ENCODE measurements at regions of chr14 and their contacts with region 1.

Region 1: DNA sequence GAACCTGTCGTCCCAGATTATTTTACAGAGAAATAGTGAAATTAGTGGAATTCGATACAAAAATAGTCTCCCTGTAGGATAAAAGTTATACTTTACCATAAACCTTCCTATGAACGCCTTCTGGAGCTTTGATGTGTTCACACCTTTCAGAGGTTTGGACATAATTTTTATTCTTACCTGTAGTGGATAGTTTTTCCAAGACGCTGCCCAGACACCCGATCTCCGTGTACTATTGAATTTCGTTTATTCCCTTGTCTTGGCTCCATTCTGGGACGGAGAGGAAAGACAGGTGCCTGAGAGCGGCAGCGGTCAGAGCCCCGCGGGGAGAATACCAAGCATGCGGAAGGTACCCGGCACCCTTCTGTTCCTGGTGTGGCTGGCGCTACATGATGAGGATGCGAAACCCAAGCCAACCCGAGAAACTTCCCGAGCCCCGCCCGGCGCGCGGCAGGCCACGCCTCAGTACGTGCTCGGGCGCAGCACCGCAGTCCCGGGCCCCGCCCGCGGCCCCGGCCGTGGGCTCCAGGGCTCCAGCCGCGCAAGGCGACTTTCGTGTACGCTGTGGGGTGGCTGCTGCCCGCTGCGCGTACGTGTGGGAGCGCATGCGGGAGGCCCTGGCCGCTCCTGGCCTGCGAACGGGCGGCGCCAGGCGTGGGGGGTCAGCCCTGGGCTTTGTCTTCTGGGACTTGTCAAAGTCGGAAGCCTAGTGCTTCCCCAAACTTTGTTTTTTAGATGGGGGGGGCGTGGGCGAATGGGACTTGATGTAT is 11.3 kb upstream of the SNAPC1 start:
- DNase-seq: peak; percentile 89
- CTCF ChIP-seq: no peak

Region 2: DNA sequence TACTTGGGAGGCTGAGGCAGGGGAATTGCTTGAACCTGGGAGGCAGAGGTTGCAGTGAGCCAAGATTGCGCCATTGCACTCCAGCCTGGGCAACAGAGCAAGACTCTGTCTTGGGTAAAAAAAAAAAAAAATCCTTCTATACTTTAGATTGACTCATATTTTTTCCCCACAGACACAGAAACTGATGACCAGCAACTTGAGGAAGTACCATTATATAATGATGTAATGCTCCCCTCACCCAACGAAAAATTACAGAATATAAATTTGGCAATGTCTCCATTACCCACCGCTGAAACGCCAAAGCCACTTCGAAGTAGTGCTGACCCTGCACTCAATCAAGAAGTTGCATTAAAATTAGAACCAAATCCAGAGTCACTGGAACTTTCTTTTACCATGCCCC is 13.0 kb before region 1 on chr14:
- CTCF ChIA-PET with region 1: interaction called, 15 read pairs
- POLR2A ChIA-PET with region 1: interaction called, 3 read pairs
- DNase-seq: no peak
- CTCF ChIP-seq: no peak

Region 3: DNA sequence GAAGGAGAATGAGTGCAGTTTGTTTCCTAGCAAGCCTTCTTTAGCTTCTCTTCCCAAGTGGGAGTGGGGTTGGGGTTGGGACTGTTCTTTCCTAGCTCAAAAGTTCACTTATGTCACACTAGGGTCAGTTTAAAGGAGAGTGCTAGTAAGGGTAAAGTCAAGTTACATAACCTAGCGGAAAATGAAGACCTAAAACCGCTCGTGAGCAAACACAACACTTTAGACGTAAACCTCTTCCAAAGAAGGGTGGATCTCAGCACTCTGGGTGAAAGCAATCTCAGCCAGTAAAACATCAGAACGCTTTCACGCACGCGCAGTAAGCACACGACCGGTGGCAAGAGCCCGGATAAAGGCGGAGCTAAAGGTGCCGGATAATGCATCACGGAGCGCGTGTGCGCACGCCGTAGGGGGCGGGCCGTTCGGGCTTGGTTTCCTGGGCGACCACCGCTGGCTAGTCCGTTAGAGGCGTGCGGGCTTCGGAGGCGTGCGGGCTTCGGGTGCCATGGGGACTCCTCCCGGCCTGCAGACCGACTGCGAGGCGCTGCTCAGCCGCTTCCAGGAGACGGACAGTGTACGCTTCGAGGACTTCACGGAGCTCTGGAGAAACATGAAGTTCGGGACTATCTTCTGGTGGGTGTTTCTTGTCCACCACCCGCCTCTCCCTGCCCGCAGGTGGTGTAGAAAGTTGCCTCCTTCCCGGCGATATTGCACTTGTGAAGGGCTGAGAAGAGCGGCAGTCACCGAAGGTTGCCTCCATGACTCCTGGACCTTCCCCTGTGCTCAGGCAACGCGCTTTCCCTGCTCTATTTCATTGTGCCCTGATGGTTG is 11.3 kb after region 1 on chr14 and contains the start of gene SNAPC1:
- CTCF ChIA-PET with region 1: interaction called, 24 read pairs
- POLR2A ChIA-PET with region 1: interaction called, 9 read pairs
- DNase-seq: peak; percentile 99
- CTCF ChIP-seq: no peak

Region 4: DNA sequence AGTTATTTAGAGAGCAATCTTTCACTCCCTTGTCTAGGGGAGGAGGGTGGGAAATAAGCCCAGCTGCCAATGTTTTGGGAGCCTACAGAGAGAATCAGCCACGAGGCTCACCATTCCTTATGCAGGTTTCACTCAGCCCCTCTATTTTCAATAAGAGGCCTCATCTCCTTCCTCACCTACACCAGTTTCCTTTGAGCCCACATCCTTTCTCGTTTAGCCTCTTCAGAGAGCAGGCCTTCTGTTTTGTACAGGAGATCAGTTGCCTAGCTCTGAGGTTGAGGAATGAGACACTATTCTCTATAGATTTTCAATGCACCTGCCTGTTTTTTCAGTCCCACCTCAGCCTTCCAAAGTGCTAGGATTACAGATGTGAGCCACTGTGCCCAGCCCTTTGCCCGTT is 29.2 kb after region 1 on chr14:
- CTCF ChIA-PET with region 1: no interaction called
- POLR2A ChIA-PET with region 1: no interaction called
- DNase-seq: peak; percentile 35
- CTCF ChIP-seq: no peak

Measured in GM10248 (cell line).